Pancreas (tissue), 10 donors: ENCODE measurements at regions of chr6 and their contacts with region 1.

Region 1: GRCh38 chr6:142692942-142693341 is 252.0 kb downstream of the HIVEP2 start:
- DNase-seq: peak in 5 of 6 donors; percentile 9 to 62 (median 45)
- ATAC-seq: peak; percentile 45 to 86 (median 74)
- H3K4me3 ChIP-seq: no peak overlapping the region
- H3K27ac ChIP-seq: no peak overlapping the region
- H3K4me1 ChIP-seq: peaks cover 0 to 15% (median 14%) of the 10 kb centered on the region in 3 donors
- H3K27me3 ChIP-seq: no peaks in the 10 kb centered on the region
- CTCF ChIP-seq: peak; percentile 72 to 79 (median 77)

Region 2: DNA sequence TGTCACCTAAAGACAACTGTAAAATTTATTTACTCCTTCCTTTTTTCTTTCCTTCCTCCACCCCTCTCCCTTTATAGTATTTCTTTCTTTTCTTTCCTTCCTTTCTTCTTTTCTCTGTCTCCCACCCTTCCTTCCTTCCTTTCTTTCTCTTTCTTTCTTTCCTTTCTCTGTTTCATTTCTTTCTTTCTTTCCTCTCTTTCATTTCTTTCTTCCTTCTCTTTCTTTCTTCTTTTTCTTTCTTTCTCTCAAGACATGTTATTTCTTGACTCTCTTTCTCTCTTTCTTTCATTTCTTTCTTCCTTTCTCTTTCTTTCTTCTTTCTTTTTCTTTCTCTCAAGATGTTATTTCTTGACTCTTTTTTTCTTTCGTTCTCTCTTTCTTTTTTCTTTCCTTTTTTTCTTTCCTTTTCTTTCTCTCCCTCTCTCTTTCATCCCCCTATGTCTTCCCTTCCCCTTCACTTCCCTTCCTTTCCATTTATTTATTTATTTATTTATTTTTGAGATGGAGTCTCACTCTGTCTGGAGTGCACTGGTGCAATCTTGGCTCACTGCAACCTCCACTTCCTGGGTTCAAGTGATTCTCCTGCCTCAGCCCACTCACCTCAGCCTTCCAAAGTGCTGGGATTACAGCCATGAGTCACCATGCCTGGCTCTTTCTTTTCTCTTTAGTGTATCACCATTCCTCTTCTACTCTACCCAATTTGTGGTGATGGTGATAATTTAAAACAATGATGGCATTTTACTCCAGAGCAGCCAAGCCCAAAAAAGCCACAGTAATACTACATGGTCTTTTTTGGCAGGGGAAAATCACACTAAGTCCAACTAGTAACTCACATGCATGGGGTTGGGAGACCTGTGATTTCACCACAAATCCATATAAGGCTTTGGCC is 203.0 kb before region 1 on chr6:
- intact Hi-C with region 1: no loop called
- DNase-seq: no peak
- ATAC-seq: no peak
- H3K4me3 ChIP-seq: no peak overlapping the region
- H3K27ac ChIP-seq: no peak overlapping the region
- H3K4me1 ChIP-seq: no peaks in the 10 kb centered on the region
- H3K27me3 ChIP-seq: no peaks in the 10 kb centered on the region
- CTCF ChIP-seq: no peak

Region 3: GRCh38 chr6:142833054-142833453 is 140.1 kb after region 1 on chr6:
- intact Hi-C with region 1: no loop called
- DNase-seq: no peak
- ATAC-seq: peak in 1 of 4 donors; percentile 29
- H3K4me3 ChIP-seq: no peak overlapping the region
- H3K27ac ChIP-seq: no peak overlapping the region
- H3K4me1 ChIP-seq: peaks cover 0 to 6% (median 6%) of the 10 kb centered on the region in 3 donors
- H3K27me3 ChIP-seq: no peaks in the 10 kb centered on the region
- CTCF ChIP-seq: no peak

Region 4: DNA sequence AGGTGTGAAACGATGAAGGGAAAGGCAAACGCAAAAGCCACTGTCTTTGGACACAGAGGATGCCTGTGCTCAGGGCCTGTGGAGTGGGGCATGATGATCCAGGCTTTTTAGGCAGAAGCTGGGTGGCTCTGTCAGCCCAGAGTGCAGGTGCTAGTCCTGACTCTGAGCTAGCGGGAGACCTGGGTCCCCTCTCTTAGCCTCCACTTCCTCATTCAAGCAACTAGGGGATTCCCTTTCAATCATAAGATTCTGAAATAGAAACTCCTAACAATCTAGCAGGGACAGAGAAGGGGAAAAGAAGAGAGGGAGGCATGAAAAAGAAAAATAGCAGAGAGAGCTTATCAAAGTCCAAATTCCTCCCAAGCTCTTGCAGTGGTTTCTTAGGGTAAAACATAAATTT is 259.7 kb after region 1 on chr6:
- intact Hi-C with region 1: loop called in 1 of 3 experiments (anchors 10 kb)
- DNase-seq: no peak
- ATAC-seq: no peak
- H3K4me3 ChIP-seq: no peak overlapping the region
- H3K27ac ChIP-seq: no peak overlapping the region
- H3K4me1 ChIP-seq: peaks cover 0 to 17% (median 16%) of the 10 kb centered on the region in 3 donors
- H3K27me3 ChIP-seq: no peaks in the 10 kb centered on the region
- CTCF ChIP-seq: no peak

Region 5: GRCh38 chr6:143026696-143027449 is 333.9 kb after region 1 on chr6:
- intact Hi-C with region 1: loop called (anchors 5 to 10 kb)
- DNase-seq: peak in 5 of 6 donors; percentile 6 to 58 (median 20)
- ATAC-seq: peak; percentile 72 to 89 (median 83)
- H3K4me3 ChIP-seq: no peak overlapping the region
- H3K27ac ChIP-seq: no peak overlapping the region
- H3K4me1 ChIP-seq: no peaks in the 10 kb centered on the region
- H3K27me3 ChIP-seq: no peaks in the 10 kb centered on the region
- CTCF ChIP-seq: peak in 2 of 4 donors; percentile 44

Region 6: GRCh38 chr6:143427109-143427817 is 734.3 kb after region 1 on chr6:
- intact Hi-C with region 1: loop called in 1 of 3 experiments (anchors 10 kb)
- DNase-seq: peak; percentile 23 to 80 (median 55)
- ATAC-seq: peak; percentile 71 to 98 (median 96)
- H3K4me3 ChIP-seq: no peak overlapping the region
- H3K27ac ChIP-seq: no peak overlapping the region
- H3K4me1 ChIP-seq: no peaks in the 10 kb centered on the region
- H3K27me3 ChIP-seq: no peaks in the 10 kb centered on the region
- CTCF ChIP-seq: peak; percentile 54 to 83 (median 80)